ENCODE measurements at regions of chr13 and their contacts with region 1.

Region 1: GRCh38 chr13:79679334-79679733 is 198.4 kb downstream of the NDFIP2 start:
- DNase-seq: peak; percentile 51
- H3K4me3 ChIP-seq: no peak overlapping the region
- H3K27ac ChIP-seq: no peak overlapping the region
- H3K4me1 ChIP-seq: no peaks in the 10 kb centered on the region
- H3K27me3 ChIP-seq: no peaks in the 10 kb centered on the region
- CTCF ChIP-seq: peak; percentile 12 to 72 (median 60)
- POLR2A ChIP-seq: no peak

Region 2: DNA sequence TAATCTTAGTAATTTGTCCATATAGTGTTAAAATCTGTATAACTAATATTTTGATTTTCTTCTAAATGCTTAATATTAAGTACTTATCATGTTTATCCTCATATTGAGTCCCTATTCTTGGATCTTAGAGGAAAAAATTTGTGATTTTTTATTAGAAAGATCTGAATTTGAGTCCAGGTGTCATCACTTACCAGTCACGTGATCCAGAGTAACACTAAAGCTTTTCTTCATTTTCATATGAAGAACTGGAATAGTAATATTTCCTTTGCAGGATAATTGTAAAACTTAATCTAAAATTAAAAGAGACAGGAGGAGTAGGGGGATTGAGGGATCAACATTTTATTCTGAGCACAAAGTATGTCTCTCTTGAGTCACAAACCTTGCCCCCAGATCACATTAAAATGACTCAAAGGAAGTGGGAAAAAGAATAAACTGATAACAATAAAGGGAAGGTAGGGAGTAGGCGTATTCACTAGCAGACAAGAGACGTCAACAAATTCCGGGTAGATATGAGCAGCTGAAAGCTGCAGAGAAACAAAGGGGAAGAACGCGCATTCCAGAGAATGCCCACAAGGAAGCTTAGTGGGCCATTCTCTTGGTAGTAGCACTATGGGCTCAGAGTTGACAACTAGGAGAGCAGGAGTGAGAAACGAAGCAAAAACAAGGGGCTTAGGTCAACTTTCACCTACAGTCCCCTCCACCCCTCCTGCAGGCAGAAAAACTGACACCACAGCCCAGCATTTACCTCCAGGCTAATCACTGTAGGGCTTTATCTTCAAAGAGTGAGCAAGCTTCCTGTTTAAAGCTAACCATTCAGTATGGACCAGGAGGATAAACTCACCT is 538.5 kb after region 1 on chr13:
- intact Hi-C with region 1: no loop called
- DNase-seq: no peak
- H3K4me3 ChIP-seq: no peak overlapping the region
- H3K27ac ChIP-seq: no peak overlapping the region
- H3K4me1 ChIP-seq: no peaks in the 10 kb centered on the region
- H3K27me3 ChIP-seq: no peaks in the 10 kb centered on the region
- CTCF ChIP-seq: no peak
- POLR2A ChIP-seq: no peak

Region 3: GRCh38 chr13:80363890-80364503 is 684.7 kb after region 1 on chr13:
- intact Hi-C with region 1: loop called (anchors 10 kb)
- DNase-seq: no peak
- H3K4me3 ChIP-seq: no peak overlapping the region
- H3K27ac ChIP-seq: no peak overlapping the region
- H3K4me1 ChIP-seq: no peaks in the 10 kb centered on the region
- H3K27me3 ChIP-seq: no peaks in the 10 kb centered on the region
- CTCF ChIP-seq: peak; percentile 49 to 74 (median 64)
- POLR2A ChIP-seq: no peak

Measured in prostate gland (tissue), 2 donors.